Activated CD4-positive, alpha-beta T cell treated with anti-CD3 and anti-CD28 coated beads, Interleukin-2, amount 10 ng/mL, durations not matched to agents 24 days and 14 days (primary cell): ENCODE measurements at regions of chr19 and their contacts with region 1.

Region 1: GRCh38 chr19:57389730-57390598 is at the start of gene ZNF548:
- DNase-seq: peak; percentile 98
- H3K4me3 Mint-ChIP-seq: peak within 1 kb of the TSS; percentile 87
- H3K27ac Mint-ChIP-seq: peak within 1 kb of the TSS; percentile 96
- H3K4me1 Mint-ChIP-seq: peaks cover 23% of the 10 kb centered on the region
- H3K27me3 Mint-ChIP-seq: no peaks in the 10 kb centered on the region
- total RNA-seq, gene ZNF548: 10.6 and 12.7 TPM in 2 replicates

Region 2: GRCh38 chr19:57279418-57280066 is 110.4 kb before region 1 on chr19:
- intact Hi-C with region 1: loop called (anchors 1 kb)
- DNase-seq: peak; percentile 93
- H3K4me3 Mint-ChIP-seq: no peak overlapping the region
- H3K27ac Mint-ChIP-seq: no peak overlapping the region
- H3K4me1 Mint-ChIP-seq: peaks cover 24% of the 10 kb centered on the region
- H3K27me3 Mint-ChIP-seq: no peaks in the 10 kb centered on the region

Region 3: GRCh38 chr19:57350877-57351805 is 38.8 kb before region 1 on chr19 and contains the start of gene ZNF304:
- intact Hi-C with region 1: loop called (anchors 1 kb)
- DNase-seq: peak; percentile 96
- H3K4me3 Mint-ChIP-seq: peak within 1 kb of the TSS; percentile 93
- H3K27ac Mint-ChIP-seq: peak within 1 kb of the TSS; percentile 91
- H3K4me1 Mint-ChIP-seq: peaks cover 29% of the 10 kb centered on the region
- H3K27me3 Mint-ChIP-seq: no peaks in the 10 kb centered on the region
- total RNA-seq, gene ZNF304: 5.3 and 5.8 TPM in 2 replicates

Region 4: GRCh38 chr19:57410877-57411671 is 21.1 kb after region 1 on chr19 and contains the start of gene ZNF17:
- intact Hi-C with region 1: loop called (anchors 1 kb)
- DNase-seq: peak; percentile 97
- H3K4me3 Mint-ChIP-seq: peak within 1 kb of the TSS; percentile 94
- H3K27ac Mint-ChIP-seq: peak within 1 kb of the TSS; percentile 80
- H3K4me1 Mint-ChIP-seq: peaks cover 14% of the 10 kb centered on the region
- H3K27me3 Mint-ChIP-seq: no peaks in the 10 kb centered on the region
- total RNA-seq, gene ZNF17: 7.4 and 7.8 TPM in 2 replicates

Region 5: DNA sequence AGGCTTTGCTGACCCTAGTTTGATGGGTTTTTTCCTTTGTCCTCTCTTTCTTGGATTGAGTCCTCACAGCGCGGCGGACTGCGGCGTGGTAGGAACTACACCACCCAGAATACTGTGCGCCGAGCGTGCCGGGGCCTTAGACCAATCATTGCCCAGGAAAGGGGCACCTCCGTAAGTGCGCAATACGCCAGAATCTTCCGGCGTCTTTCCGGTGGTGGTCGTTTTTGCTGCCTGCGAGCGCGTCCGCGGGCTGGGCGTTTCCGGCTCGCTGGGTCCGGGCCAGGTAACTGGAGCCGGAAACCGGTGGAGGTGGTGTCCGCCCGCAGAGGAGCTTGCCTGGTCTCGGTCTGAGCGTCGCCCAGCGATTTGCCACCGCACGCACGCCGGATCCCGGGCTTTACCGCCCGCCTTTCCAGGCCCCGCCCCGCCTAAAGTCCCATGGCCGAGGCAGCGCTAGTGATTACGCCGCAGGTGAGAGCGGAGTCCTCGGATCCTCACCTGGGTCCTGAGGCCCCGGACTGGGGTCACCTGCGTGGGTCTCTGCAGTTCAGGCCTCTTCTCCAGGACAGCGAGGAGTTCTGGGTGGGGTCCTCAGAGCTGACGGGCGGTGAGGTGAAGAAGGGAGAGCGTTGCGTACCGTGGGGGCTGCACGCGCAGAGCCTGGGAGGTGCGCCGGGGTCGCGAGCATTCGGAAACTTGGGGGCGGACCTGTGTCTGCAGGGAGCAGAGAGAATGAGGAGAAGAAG is 137.3 kb after region 1 on chr19 and contains the start of gene ZNF549:
- intact Hi-C with region 1: loop called (anchors 1 kb)
- DNase-seq: peak; percentile 96
- H3K4me3 Mint-ChIP-seq: peak within 1 kb of the TSS; percentile 99
- H3K27ac Mint-ChIP-seq: peak within 1 kb of the TSS; percentile 57
- H3K4me1 Mint-ChIP-seq: peaks cover 14% of the 10 kb centered on the region
- H3K27me3 Mint-ChIP-seq: no peaks in the 10 kb centered on the region
- total RNA-seq, gene ZNF549: 4.0 and 4.9 TPM in 2 replicates

Region 6: GRCh38 chr19:57632987-57633831 is 243.2 kb after region 1 on chr19 and contains the start of gene ZNF211:
- intact Hi-C with region 1: loop called (anchors 1 kb)
- DNase-seq: peak; percentile 95
- H3K4me3 Mint-ChIP-seq: peak within 1 kb of the TSS; percentile 87
- H3K27ac Mint-ChIP-seq: peak within 1 kb of the TSS; percentile 87
- H3K4me1 Mint-ChIP-seq: peaks cover 14% of the 10 kb centered on the region
- H3K27me3 Mint-ChIP-seq: no peaks in the 10 kb centered on the region
- total RNA-seq, gene ZNF211: 7.7 and 10.0 TPM in 2 replicates